Activated B cell treated with CpG ODN at 0.5 μM for 24 hours (primary cell): ENCODE measurements at regions of chr12 and their contacts with region 1.

Region 1: GRCh38 chr12:40107098-40107802 is 1.4 kb upstream of the SLC2A13 start:
- DNase-seq: peak; percentile 76
- ATAC-seq: peak; percentile 45
- H3K4me3 Mint-ChIP-seq: peak overlapping the region; percentile 87
- H3K27ac Mint-ChIP-seq: peak overlapping the region; percentile 73
- H3K4me1 Mint-ChIP-seq: peaks cover 45% of the 10 kb centered on the region
- H3K27me3 Mint-ChIP-seq: no peaks in the 10 kb centered on the region
- CTCF ChIP-seq: no peak

Region 2: GRCh38 chr12:39443081-39443928 is 663.9 kb before region 1 on chr12 and contains the start of gene KIF21A:
- CTCF ChIA-PET with region 1: no interaction called
- POLR2A ChIA-PET with region 1: no interaction called
- intact Hi-C with region 1: loop called (anchors 10 kb)
- DNase-seq: peak; percentile 65
- ATAC-seq: peak; percentile 91
- H3K4me3 Mint-ChIP-seq: peak within 1 kb of the TSS; percentile 82
- H3K27ac Mint-ChIP-seq: peak within 1 kb of the TSS; percentile 61
- H3K4me1 Mint-ChIP-seq: peaks cover 16% of the 10 kb centered on the region
- H3K27me3 Mint-ChIP-seq: peaks cover 31% of the 10 kb centered on the region
- CTCF ChIP-seq: no peak
- total RNA-seq, gene KIF21A: 6.1 and 7.6 TPM in 2 replicates

Region 3: DNA sequence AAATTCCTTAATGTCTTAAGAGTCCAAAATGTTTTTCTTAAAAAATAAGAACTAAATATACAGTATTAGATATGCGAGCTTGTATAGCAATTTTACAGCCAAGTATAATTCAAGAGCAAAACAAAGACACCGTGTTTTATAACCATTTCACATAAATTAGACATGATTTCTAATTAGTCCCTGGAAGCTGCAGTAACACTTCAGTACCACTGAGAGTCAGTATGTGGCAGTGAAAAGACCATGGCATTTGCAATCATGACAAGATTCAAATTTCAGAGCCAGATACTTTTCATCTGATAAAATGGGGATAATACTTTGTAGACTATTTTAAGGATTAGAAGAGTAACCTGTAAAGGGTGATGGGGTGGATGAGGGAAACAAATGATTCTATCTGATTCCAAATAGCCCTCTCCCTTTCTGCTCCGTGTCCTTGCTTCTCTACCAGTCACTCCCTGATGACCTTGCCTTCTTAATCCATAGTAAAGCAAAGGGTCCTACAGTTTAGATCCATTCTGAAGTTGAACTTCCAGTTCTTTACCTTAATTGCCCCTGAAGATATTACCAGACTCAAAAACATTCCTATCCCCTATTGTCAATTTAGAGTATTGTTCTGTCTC is 342.2 kb before region 1 on chr12:
- CTCF ChIA-PET with region 1: no interaction called
- POLR2A ChIA-PET with region 1: no interaction called
- intact Hi-C with region 1: loop called (anchors 1 kb)
- DNase-seq: no peak
- ATAC-seq: peak; percentile 45
- H3K4me3 Mint-ChIP-seq: no peak overlapping the region
- H3K27ac Mint-ChIP-seq: no peak overlapping the region
- H3K4me1 Mint-ChIP-seq: no peaks in the 10 kb centered on the region
- H3K27me3 Mint-ChIP-seq: no peaks in the 10 kb centered on the region
- CTCF ChIP-seq: peak; percentile 37

Region 4: DNA sequence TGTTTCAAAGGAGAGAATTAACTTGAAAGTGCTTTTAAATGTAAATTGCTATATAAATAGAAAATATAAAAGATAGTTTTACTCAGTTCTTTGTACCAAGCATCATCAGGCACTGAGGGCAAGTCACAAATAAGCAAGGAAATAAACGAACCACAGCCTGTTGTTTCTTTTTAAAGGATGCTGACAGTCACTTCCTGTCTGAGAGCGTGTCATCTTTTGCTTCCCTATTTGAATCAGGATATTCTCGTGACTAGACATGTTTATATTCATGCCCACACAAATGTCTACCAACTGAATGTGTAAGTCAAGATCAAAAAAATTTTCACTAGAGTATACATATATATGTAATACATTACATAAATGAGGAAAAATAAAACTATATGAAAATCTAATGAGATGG is 30.0 kb after region 1 on chr12:
- CTCF ChIA-PET with region 1: no interaction called
- POLR2A ChIA-PET with region 1: interaction called, 4 read pairs
- intact Hi-C with region 1: loop called (anchors 1 kb)
- DNase-seq: no peak
- ATAC-seq: peak; percentile 79
- H3K4me3 Mint-ChIP-seq: no peak overlapping the region
- H3K27ac Mint-ChIP-seq: no peak overlapping the region
- H3K4me1 Mint-ChIP-seq: peaks cover 8% of the 10 kb centered on the region
- H3K27me3 Mint-ChIP-seq: no peaks in the 10 kb centered on the region
- CTCF ChIP-seq: no peak

Region 5: DNA sequence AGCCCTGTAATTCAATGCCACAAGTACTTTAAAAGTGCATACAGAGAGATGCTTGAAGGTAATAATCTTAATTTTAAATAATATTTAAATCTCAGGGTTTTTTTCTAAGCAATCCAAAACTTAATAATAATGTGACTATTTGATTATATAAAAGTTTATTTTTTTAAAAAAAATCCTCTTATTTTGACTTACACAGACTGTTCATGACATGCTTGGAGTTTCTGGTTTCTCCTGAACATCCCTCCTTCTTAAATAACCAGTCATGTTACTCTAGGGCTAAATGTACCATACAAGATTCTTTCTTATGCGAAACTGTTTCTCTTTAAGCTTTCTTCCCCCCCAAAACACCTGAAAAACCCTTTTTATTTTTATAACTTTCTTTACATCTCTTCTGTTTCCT is 56.8 kb after region 1 on chr12:
- CTCF ChIA-PET with region 1: no interaction called
- POLR2A ChIA-PET with region 1: no interaction called
- intact Hi-C with region 1: no loop called
- DNase-seq: no peak
- ATAC-seq: no peak
- H3K4me3 Mint-ChIP-seq: no peak overlapping the region
- H3K27ac Mint-ChIP-seq: no peak overlapping the region
- H3K4me1 Mint-ChIP-seq: peaks cover 15% of the 10 kb centered on the region
- H3K27me3 Mint-ChIP-seq: no peaks in the 10 kb centered on the region
- CTCF ChIP-seq: no peak

Region 6: GRCh38 chr12:40224439-40225291 is 117.4 kb after region 1 on chr12 and contains the start of gene LRRK2:
- CTCF ChIA-PET with region 1: no interaction called
- POLR2A ChIA-PET with region 1: interaction called, 17 read pairs
- intact Hi-C with region 1: loop called (anchors 1 kb)
- DNase-seq: peak; percentile 90
- ATAC-seq: peak; percentile 82
- H3K4me3 Mint-ChIP-seq: peak within 1 kb of the TSS; percentile 91
- H3K27ac Mint-ChIP-seq: peak within 1 kb of the TSS; percentile 96
- H3K4me1 Mint-ChIP-seq: peaks cover 61% of the 10 kb centered on the region
- H3K27me3 Mint-ChIP-seq: no peaks in the 10 kb centered on the region
- CTCF ChIP-seq: no peak
- total RNA-seq, gene LRRK2: 59.9 and 71.7 TPM in 2 replicates